ENCODE measurements at regions of chr2 and their contacts with region 1.

Region 1: GRCh38 chr2:61566566-61566965 is 28.4 kb upstream of the XPO1 start:
- DNase-seq: no peak
- H3K4me3 ChIP-seq: no peak overlapping the region
- H3K27ac ChIP-seq: no peak overlapping the region
- H3K4me1 ChIP-seq: no peaks in the 10 kb centered on the region
- H3K27me3 ChIP-seq: no peaks in the 10 kb centered on the region
- CTCF ChIP-seq: no peak

Region 2: GRCh38 chr2:61750624-61751023 is 184.1 kb after region 1 on chr2:
- CTCF ChIA-PET with region 1: no interaction called
- POLR2A ChIA-PET with region 1: interaction called, 21 read pairs
- intact Hi-C with region 1: no loop called
- DNase-seq: no peak
- H3K4me3 ChIP-seq: no peak overlapping the region
- H3K27ac ChIP-seq: no peak overlapping the region
- H3K4me1 ChIP-seq: no peaks in the 10 kb centered on the region
- H3K27me3 ChIP-seq: no peaks in the 10 kb centered on the region
- CTCF ChIP-seq: no peak

Measured in A673 (cell line).